ENCODE measurements at regions of chr4 and their contacts with region 1.

Region 1: DNA sequence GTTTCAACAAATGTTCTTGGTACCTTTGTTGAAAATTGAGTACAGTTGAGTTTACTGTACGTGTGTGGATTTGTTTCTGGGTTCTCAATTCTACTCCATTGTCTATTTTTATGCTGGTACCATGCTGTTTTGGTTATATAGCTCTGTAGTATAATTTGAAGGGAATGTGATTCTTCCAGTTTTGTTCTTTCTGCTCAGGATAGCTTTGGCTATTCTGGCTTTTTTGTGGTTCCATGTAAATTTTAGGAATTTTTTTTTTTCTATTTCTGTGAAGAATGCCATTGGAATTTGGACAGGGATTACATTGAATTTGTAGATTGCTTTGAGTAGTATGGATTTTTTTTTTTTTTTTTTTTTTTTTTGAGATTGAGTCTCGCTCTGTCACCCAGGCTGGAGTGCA is 373.4 kb downstream of the IL15 start:
- DNase-seq: no peak
- H3K4me3 ChIP-seq: no peak overlapping the region
- H3K27ac ChIP-seq: no peak overlapping the region
- H3K27me3 ChIP-seq: no peaks in the 10 kb centered on the region
- CTCF ChIP-seq: no peak

Region 2: DNA sequence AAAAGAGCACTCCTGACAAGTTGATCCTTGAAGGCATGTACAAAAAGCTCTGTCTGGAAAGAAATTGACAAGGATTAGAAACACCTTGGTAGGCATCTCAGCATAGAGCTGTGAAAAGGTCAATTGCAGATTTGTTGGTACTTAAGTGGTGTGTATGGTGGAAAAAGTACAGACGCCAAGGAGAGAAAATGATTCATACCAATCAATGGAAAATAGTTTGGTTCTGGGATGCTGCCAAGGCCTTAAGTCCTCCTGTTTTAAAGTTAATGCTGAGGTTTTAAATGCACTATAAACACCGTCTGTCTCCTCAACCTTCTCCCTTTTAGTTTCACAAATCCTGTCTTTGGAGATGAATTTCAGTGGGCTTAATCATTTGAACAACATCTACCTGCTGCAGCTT is 150.8 kb after region 1 on chr4:
- CTCF ChIA-PET with region 1: interaction called, 10 read pairs
- POLR2A ChIA-PET with region 1: no interaction called
- DNase-seq: no peak
- H3K4me3 ChIP-seq: no peak overlapping the region
- H3K27ac ChIP-seq: no peak overlapping the region
- H3K27me3 ChIP-seq: no peaks in the 10 kb centered on the region
- CTCF ChIP-seq: no peak